ENCODE measurements at regions of chr11 and their contacts with region 1.

Region 1: DNA sequence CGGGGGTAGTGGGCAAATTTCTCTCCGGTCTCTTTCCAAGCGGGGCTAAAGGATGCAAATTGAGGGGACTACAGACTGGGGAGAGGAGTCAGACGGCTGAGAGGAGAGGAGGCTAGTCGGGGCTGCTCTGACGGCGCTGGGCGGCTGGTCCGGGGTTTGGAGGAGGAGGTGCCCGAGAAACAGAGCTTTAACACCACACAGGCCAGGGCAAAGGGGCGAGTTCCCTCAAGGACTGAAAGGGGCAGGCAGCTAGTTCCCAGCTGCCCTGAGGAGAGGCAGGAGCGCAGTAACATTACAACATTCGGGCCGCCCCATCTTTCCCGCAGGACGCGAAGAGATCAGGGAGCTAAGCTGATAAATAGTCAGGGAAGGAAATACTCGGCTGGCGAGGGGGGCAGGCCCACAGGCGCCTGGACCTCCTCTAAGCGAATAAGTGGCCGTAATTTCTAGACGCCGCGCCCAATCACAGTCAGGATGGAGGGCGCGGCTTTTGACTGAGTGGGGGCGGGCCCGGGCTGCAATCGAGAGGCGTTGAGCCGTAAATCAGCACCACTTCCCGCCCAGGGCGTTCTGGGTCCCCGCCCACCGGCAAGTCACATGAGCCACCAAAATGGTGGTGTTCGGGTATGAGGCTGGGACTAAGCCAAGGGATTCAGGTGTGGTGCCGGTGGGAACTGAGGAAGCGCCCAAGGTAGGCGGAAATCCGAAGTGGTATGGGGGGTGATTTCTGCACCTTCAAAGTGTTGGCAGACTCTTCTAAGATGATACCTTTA is at the start of gene TMEM126B:
- DNase-seq: peak; percentile 97
- ATAC-seq: peak; percentile 99
- H3K4me3 Mint-ChIP-seq: peak within 1 kb of the TSS; percentile 100
- H3K27ac Mint-ChIP-seq: peak within 1 kb of the TSS; percentile 98
- H3K4me1 Mint-ChIP-seq: peaks cover 28% of the 10 kb centered on the region
- H3K27me3 Mint-ChIP-seq: no peaks in the 10 kb centered on the region
- CTCF ChIP-seq: no peak
- total RNA-seq, gene TMEM126B: 52.8 to 65.8 TPM (median 63.8 TPM) in 3 replicates

Region 2: DNA sequence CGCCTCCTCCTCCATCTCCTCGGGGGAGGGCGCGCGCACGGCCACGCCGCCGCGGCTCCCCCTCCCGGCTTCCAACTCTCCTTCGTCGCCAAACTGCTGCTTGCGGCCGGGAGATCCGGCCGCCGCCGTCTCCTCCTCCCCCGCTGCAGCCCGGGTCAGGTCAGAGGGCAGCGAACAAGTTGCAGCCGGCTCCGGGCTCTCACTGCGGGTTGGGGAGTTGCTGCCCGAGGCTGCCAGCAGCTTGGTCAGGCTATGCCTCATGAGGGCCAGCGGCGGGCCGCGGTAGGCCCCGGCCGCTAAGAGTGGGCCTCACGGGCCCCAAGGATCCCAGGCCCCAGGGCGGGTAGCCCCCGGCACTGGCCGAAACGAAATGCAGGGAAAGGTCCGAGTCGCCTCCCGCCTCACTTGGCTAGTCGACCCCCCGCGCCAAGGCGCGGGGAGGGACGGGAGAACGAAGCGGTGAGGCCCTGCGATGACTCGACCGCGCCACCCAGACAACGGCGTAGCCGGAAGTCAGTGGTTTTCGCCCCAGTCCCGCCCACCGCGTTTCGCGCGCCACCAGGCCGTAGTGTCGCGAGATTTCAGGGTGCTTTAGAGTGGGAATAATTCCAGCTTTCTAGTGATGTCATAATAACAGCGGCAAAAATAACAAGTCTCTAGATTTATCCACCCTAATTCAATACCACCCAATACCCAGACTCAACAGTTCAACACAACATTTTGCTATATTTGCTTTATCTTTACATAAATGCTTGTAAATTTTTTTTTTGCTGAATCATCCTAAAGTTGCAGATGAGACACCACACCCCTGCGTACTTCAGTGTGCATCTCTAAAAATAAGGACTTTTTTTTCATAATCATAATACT is 36.7 kb after region 1 on chr11 and contains the start of gene CREBZF:
- CTCF ChIA-PET with region 1: no interaction called
- POLR2A ChIA-PET with region 1: interaction called, 13 read pairs
- DNase-seq: peak; percentile 94
- ATAC-seq: peak; percentile 93
- H3K4me3 Mint-ChIP-seq: peak within 1 kb of the TSS; percentile 96
- H3K27ac Mint-ChIP-seq: peak within 1 kb of the TSS; percentile 96
- H3K4me1 Mint-ChIP-seq: peaks cover 28% of the 10 kb centered on the region
- H3K27me3 Mint-ChIP-seq: peaks cover 1% of the 10 kb centered on the region
- CTCF ChIP-seq: no peak
- total RNA-seq, gene CREBZF: 46.9 to 54.6 TPM (median 48.6 TPM) in 3 replicates

Measured in WTC11 (cell line).